ENCODE measurements at regions of chr11 and their contacts with region 1.

Region 1: GRCh38 chr11:12224537-12224893 is 114.1 kb downstream of the MICAL2 start:
- DNase-seq: peak; percentile 85
- H3K4me3 Mint-ChIP-seq: peak overlapping the region; percentile 68
- H3K27ac Mint-ChIP-seq: peak overlapping the region; percentile 91
- H3K4me1 Mint-ChIP-seq: peaks cover 69% of the 10 kb centered on the region
- H3K27me3 Mint-ChIP-seq: no peaks in the 10 kb centered on the region

Region 2: GRCh38 chr11:12110201-12110713 is 114.3 kb before region 1 on chr11 and contains the start of gene MICAL2:
- intact Hi-C with region 1: no loop called
- DNase-seq: peak; percentile 90
- H3K4me3 Mint-ChIP-seq: peak within 1 kb of the TSS; percentile 90
- H3K27ac Mint-ChIP-seq: peak within 1 kb of the TSS; percentile 99
- H3K4me1 Mint-ChIP-seq: peaks cover 75% of the 10 kb centered on the region
- H3K27me3 Mint-ChIP-seq: no peaks in the 10 kb centered on the region
- total RNA-seq, gene MICAL2: 595 and 619 TPM in 2 replicates

Region 3: DNA sequence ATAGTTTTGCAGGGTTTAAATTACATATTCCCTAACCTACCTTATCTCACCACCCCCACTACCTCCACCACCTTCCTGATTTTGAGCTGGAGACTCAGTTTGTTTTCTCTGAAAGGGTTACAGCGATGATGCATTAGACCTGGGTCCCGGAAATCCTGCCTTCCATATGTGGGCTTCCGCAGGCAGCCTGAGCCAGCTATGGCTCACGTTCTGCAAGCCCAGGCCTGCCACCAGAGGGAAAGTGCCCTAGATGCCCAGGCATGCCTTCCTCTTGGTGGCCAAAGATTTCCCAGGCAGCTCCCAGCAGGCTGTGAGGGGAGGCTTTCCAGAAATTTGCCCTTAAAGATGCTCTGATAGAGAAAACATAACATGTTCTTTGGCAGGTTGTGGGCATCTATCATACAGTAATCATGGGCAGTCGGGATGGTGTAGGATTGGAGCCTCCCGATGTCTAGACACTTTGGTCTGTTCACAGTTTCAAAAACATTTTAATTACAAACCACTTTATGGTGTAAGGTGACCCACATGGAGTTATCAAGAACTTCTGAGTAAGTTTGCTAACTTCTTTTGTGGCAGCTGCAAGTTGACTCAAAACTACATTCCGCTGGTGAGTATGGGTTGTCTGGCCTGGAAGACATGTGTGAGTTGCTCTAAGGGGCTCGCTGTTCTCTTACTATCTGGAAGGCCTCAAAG is 34.8 kb before region 1 on chr11:
- intact Hi-C with region 1: loop called (anchors 1 kb)
- DNase-seq: no peak
- H3K4me3 Mint-ChIP-seq: peak overlapping the region; percentile 48
- H3K27ac Mint-ChIP-seq: peak overlapping the region; percentile 80
- H3K4me1 Mint-ChIP-seq: peaks cover 82% of the 10 kb centered on the region
- H3K27me3 Mint-ChIP-seq: no peaks in the 10 kb centered on the region

Region 4: DNA sequence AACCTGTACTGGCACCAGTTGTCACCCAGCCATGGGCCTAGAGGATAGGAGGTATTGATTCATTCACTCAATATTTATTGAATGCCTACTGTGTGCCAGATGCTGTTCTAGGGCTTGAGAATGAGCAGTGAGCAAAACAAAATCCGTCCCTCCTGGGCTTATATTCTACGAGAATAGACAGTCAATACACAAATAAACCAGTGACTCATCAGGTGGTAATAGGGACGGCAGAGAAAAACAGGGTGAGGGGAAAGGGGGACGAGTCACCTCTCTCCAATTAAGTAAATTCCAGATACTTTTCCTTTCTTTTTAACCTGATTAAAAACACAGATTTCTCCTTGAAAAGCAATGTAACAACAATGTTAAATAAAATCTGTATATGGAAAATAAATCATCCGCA is 10.6 kb before region 1 on chr11:
- intact Hi-C with region 1: loop called (anchors 1 kb)
- DNase-seq: no peak
- H3K4me3 Mint-ChIP-seq: no peak overlapping the region
- H3K27ac Mint-ChIP-seq: peak overlapping the region; percentile 12
- H3K4me1 Mint-ChIP-seq: peaks cover 67% of the 10 kb centered on the region
- H3K27me3 Mint-ChIP-seq: no peaks in the 10 kb centered on the region